HepG2 (cell line): ENCODE measurements at regions of chr12 and their contacts with region 1.

Region 1: DNA sequence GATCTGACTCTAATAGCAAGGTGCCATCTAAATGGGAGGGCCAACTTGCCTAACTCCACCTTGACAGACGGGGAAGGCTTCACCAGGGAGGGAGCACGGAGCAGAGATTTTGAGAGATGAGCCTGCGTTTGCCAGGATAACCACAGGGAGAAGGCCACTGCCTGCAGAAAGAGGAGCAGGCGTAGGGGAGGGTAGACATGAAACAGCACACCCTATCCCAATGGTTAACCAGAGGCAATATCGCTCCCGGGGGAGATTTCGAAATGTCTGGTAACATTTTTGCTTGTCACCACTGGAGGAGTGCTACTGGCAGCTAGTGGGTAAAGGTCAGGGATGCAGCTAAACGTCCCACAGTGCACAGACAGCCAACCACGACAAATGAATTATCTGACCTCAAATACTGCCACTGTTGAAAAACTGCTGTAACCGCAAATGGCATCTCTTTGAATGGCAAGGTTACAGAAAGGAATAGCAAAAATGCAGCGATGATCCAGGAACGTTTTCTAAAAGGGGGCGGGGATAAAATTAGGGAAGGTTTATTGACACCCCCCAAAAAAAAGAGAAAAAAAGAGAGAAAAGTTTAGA is 126.0 kb upstream of the ATF7IP start:
- DNase-seq: peak; percentile 85
- ATAC-seq: peak; percentile 99
- H3K4me3 ChIP-seq: peak overlapping the region in 1 of 3 experiments; percentile 24; a peak in 1 of 6 replicates
- H3K27ac ChIP-seq: no peak overlapping the region
- H3K4me1 ChIP-seq: peaks cover 18% of the 10 kb centered on the region
- H3K27me3 ChIP-seq: no peaks in the 10 kb centered on the region
- CTCF ChIP-seq: peak; percentile 48
- EP300 ChIP-seq: peak in 1 of 2 experiments; percentile 22; a peak in 1 of 4 replicates
- POLR2A ChIP-seq: no peak
- RAD21 ChIP-seq: 0 out of 2 replicates have a peak, but pooled peaks have one; percentile 27

Region 2: DNA sequence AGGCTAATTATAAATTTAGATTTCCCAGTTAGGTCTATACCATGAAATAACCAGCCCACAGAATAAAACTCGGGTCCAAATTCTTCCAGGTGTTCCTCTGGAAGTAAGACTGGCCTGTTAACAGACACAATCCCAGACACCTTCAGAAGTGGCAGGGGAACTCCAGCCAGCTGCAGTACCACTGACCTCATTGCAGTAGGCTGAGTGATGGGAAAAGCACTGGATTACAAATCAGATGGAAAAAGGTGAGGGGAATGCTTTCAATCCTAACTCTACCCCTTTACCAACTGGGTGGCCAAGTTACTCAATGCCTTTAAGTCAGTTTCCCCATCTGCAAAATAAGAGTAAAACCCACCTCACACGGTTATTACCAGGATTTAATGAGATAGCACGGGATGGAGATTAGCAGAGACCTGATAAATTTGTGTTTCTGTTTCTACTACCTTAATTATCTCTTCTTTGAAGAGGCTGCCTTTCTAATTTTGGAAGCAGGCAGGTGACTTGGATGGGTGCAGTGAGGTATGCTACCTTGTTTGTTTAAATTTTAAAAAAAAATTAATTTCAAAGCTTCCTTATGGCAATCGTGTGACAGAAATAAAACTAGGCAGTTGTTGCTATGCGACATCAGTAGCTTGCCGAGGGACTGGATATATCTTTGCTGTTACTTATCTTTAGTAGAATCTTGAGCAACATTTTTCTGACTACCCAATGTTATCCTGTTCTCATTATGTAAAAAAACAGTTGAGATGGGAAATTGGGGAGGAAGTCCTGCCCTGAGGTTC is 90.8 kb before region 1 on chr12:
- CTCF ChIA-PET with region 1: no interaction called
- POLR2A ChIA-PET with region 1: no interaction called
- in situ Hi-C with region 1: no loop called
- intact Hi-C with region 1: no loop called
- DNase-seq: no peak
- ATAC-seq: no peak
- H3K4me3 ChIP-seq: no peak overlapping the region
- H3K27ac ChIP-seq: no peak overlapping the region
- H3K4me1 ChIP-seq: no peaks in the 10 kb centered on the region
- H3K27me3 ChIP-seq: no peaks in the 10 kb centered on the region
- CTCF ChIP-seq: no peak
- EP300 ChIP-seq: no peak
- POLR2A ChIP-seq: no peak
- RAD21 ChIP-seq: no peak

Region 3: DNA sequence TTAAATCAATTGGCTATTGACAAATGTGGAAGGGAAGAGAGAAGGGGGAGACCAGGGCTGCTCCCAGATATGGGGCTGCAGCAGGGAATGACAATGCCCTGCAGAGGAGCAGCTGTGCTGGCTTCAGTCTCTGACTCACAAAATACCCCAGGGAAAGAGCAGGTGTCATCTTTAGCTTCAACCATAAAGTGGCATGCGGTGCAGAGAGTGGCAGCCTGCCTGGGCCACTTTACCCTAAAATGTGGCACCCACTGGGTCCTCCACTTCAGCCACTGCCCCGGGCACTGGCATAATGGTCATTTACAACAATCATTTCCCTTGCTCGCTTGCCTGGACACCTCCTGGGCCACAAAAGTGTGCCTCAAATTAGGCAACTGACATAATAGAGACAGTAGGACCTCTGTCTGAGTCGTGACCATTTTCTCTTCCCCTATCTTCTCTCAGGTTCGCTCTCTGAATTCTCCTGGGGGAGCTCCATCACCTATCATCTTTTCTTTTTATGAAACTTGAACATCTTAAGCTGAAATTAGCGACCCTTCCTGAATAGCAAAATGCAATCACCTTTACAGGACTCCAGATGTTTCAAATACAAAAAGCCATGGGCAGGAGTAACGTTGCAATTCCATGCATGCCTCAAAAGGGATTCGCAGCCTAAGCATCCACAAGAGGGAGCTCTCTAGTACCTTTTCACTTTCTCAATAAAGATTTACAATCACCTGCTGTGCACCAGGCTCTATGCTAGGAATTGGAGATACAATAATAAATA is 53.8 kb before region 1 on chr12:
- CTCF ChIA-PET with region 1: no interaction called
- POLR2A ChIA-PET with region 1: no interaction called
- in situ Hi-C with region 1: no loop called
- intact Hi-C with region 1: no loop called
- DNase-seq: peak; percentile 26
- ATAC-seq: peak; percentile 79
- H3K4me3 ChIP-seq: no peak overlapping the region
- H3K27ac ChIP-seq: no peak overlapping the region
- H3K4me1 ChIP-seq: no peaks in the 10 kb centered on the region
- H3K27me3 ChIP-seq: no peaks in the 10 kb centered on the region
- CTCF ChIP-seq: peak; percentile 65
- EP300 ChIP-seq: no peak
- POLR2A ChIP-seq: no peak
- RAD21 ChIP-seq: no peak

Region 4: DNA sequence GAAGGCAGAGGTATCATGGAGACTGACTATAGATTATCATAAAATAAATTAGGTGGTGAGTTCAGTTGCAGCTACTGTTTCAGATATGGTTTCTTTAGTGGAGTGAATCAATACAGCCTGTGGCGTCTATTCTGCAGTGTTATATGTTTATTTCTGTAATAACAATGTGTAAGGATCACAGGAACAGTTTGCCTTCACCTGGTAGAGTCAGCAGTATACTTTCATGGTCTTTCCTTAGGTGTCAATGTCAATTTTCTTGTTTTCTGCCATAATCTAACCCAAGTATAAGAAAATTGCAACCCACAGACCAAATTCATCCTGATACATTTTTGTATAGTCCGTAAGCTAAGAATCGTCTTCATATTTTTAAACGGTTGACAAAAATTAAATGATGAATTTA is 14.4 kb before region 1 on chr12:
- CTCF ChIA-PET with region 1: no interaction called
- POLR2A ChIA-PET with region 1: no interaction called
- in situ Hi-C with region 1: no loop called
- intact Hi-C with region 1: no loop called
- DNase-seq: no peak
- ATAC-seq: no peak
- H3K4me3 ChIP-seq: no peak overlapping the region
- H3K27ac ChIP-seq: no peak overlapping the region
- H3K4me1 ChIP-seq: no peaks in the 10 kb centered on the region
- H3K27me3 ChIP-seq: no peaks in the 10 kb centered on the region
- CTCF ChIP-seq: no peak
- EP300 ChIP-seq: no peak
- POLR2A ChIP-seq: no peak
- RAD21 ChIP-seq: no peak

Region 5: DNA sequence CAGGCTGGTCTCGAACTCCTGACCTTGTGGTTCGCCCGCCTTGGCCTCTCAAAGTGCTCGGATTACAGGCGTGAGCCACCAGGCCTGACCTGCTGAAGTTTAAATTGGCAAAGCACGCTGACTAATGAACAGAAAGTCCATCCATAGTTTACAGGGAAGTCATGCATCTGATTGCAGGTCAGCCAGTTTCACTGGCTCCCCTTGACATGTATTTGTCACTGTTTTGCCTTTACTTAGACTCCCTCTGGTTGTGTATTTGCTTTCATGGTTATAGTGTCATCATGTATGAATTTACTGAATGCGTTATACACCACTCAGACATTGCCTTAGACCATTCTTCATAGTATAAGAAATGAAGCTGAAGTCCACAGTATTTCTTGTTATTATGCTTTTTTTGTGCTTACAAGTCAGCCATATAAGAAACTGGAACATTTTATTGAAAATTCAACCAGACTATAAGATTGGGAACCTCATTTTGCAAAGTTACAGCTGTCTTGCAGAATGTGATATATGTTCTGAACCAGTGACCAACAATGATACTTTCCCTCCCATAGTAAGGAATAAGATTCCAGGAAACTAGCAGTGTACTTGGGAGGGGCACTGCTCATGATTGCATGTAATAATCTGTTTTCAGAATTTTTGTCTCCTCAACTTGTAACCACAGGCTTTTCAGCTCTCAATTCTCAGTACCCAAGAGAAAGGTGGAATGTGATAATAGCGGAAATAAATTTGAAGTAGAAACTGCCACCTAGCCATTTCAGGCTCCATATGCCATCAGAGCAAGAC is 74.1 kb after region 1 on chr12:
- CTCF ChIA-PET with region 1: no interaction called
- POLR2A ChIA-PET with region 1: no interaction called
- in situ Hi-C with region 1: no loop called
- intact Hi-C with region 1: no loop called
- DNase-seq: no peak
- ATAC-seq: no peak
- H3K4me3 ChIP-seq: no peak overlapping the region
- H3K27ac ChIP-seq: no peak overlapping the region
- H3K4me1 ChIP-seq: no peaks in the 10 kb centered on the region
- H3K27me3 ChIP-seq: no peaks in the 10 kb centered on the region
- CTCF ChIP-seq: no peak
- EP300 ChIP-seq: no peak
- POLR2A ChIP-seq: no peak
- RAD21 ChIP-seq: no peak

Region 6: GRCh38 chr12:14365294-14366208 is 126.1 kb after region 1 on chr12 and contains the start of gene ATF7IP:
- CTCF ChIA-PET with region 1: interaction called, 8 read pairs
- POLR2A ChIA-PET with region 1: interaction called, 3 read pairs
- in situ Hi-C with region 1: no loop called
- intact Hi-C with region 1: loop called (anchors 1 kb)
- DNase-seq: peak; percentile 29
- ATAC-seq: peak; percentile 75
- H3K4me3 ChIP-seq: peak within 1 kb of the TSS; percentile 41 to 55 (median 49)
- H3K27ac ChIP-seq: peak within 1 kb of the TSS; percentile 34
- H3K4me1 ChIP-seq: peaks cover 19% of the 10 kb centered on the region; the same call in 1 of the 2 replicates
- H3K27me3 ChIP-seq: no peaks in the 10 kb centered on the region
- CTCF ChIP-seq: peak; percentile 3; the same call in 1 of the 2 replicates
- EP300 ChIP-seq: peak in 1 of 2 experiments; percentile 88; a peak in 2 of 4 replicates
- POLR2A ChIP-seq: no peak
- RAD21 ChIP-seq: no peak
- total RNA-seq, gene ATF7IP: 11.8 and 15.2 TPM in 2 replicates

Region 7: GRCh38 chr12:14417715-14418114 is 178.3 kb after region 1 on chr12:
- CTCF ChIA-PET with region 1: no interaction called
- POLR2A ChIA-PET with region 1: no interaction called
- in situ Hi-C with region 1: no loop called
- intact Hi-C with region 1: loop called (anchors 1 kb)
- DNase-seq: peak; percentile 33
- ATAC-seq: peak; percentile 29; the same call in 1 of the 3 replicates
- H3K4me3 ChIP-seq: no peak overlapping the region
- H3K27ac ChIP-seq: no peak overlapping the region
- H3K4me1 ChIP-seq: no peaks in the 10 kb centered on the region
- H3K27me3 ChIP-seq: no peaks in the 10 kb centered on the region
- CTCF ChIP-seq: no peak
- EP300 ChIP-seq: no peak
- POLR2A ChIP-seq: no peak
- RAD21 ChIP-seq: no peak

Region 8: DNA sequence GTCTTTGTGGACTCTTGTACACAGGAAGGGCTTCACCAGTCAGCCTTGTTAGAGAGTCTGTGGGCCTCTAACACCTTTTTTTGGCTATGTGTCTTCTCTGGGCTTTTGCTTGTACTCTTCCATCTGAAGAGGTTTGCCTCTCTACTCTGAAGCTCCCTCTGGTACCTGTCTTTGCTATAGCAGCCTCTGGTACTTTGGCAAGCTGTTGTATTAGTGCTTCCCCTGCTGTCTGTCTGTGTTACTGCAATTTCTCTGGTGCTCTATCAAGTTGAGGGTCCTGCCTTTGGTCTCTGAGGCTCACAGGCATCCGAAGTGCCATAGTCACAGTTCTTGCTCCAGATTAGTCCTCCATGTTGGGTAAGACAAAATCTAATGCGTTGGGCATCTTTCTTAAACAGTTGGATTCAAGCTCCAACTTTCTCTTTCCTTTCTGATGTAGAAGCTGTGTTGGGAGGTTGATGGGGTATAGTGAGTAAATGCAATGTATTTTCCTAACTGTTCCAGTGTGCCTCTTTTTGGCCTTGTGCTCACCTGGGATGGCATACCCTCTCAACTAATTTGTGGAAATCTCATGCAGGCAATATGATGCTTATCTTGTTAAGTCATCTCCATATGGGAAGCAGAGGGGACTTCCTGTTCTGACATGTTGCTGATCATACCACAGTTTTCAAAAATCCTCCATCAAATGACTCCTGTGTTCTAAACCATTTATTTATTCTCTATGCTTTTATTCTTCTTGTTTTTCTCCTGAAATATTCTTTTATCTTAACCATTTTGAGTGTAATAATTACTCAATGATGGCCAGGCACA is 214.9 kb after region 1 on chr12:
- CTCF ChIA-PET with region 1: interaction called, 45 read pairs
- POLR2A ChIA-PET with region 1: no interaction called
- in situ Hi-C with region 1: no loop called
- intact Hi-C with region 1: loop called (anchors 1 kb)
- DNase-seq: peak; percentile 65
- ATAC-seq: peak; percentile 98
- H3K4me3 ChIP-seq: no peak overlapping the region
- H3K27ac ChIP-seq: no peak overlapping the region
- H3K4me1 ChIP-seq: no peaks in the 10 kb centered on the region
- H3K27me3 ChIP-seq: no peaks in the 10 kb centered on the region
- CTCF ChIP-seq: peak; percentile 70
- EP300 ChIP-seq: no peak
- POLR2A ChIP-seq: no peak
- RAD21 ChIP-seq: peak; percentile 78

Region 9: DNA sequence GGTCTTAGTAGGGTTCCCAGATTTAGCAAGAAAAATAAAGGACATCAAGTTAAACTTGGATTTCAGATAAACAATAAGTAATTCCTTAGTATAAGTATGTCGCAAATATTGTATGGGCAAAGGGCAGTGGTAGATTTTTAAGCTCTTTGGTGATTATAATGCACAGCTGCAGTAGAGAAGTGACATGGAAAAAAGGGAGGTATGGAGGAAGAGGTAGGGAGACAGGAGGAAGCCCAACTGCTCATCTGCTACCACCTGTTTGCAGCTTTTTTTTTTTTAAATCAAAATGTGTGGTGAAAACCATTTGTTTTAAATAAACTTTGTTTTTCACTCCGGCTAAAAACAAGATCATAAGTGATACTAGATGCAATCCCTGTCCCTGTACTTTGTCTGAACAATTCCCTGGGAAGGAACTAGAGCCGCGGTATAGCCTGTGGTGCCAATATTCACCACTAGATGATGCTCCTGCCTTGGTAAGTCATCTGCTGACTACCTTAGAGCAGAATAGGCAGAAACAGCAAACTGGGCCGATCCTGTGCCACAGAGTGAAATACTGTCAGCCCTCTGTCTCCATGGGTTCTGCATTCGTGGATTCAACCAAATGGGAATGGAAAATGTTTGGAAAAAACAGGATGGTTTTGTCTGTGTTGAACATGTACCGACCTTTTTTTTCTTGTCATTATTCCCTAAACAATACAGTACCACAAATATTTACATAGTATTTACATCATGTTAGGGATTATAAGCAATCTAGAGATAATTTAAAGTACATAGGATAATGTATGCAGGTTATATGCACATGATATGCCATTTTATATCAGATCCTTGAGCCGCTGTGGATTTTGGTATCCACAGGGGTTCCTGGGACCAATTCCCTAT is 390.6 kb after region 1 on chr12:
- CTCF ChIA-PET with region 1: no interaction called
- POLR2A ChIA-PET with region 1: no interaction called
- in situ Hi-C with region 1: no loop called
- intact Hi-C with region 1: loop called (anchors 10 kb)
- DNase-seq: peak; percentile 44
- ATAC-seq: peak; percentile 100
- H3K4me3 ChIP-seq: no peak overlapping the region
- H3K27ac ChIP-seq: no peak overlapping the region
- H3K4me1 ChIP-seq: no peaks in the 10 kb centered on the region
- H3K27me3 ChIP-seq: no peaks in the 10 kb centered on the region
- CTCF ChIP-seq: peak; percentile 91
- EP300 ChIP-seq: no peak
- POLR2A ChIP-seq: no peak
- RAD21 ChIP-seq: peak; percentile 72

Region 10: DNA sequence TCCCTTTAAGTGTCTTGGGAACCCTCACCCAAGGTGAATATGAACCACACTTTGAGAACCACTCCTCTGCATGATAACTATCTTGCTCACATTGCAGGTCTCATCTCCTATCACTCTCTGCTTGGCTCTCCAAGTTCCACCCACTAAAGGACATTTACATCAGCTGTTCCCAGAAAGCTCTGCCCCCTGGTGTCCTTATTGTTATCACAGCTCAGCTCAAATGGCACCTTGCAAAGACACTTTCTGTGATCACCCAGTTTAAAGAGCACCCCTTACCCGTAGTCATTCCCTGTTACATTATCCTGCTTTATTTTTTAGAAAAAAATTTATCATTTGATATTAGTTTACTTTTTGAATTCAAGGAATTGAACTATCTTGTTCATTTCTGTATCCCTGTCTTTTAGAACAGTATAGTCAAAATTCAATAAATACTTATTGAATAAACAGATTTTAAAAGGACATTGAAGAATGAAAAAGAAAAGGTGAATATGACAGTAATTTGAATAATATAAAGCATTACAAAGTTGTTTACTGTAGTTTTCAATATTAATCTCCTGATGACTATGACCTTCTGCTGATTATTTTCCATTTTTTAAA is 477.5 kb after region 1 on chr12:
- CTCF ChIA-PET with region 1: interaction called, 5 read pairs
- POLR2A ChIA-PET with region 1: no interaction called
- in situ Hi-C with region 1: loop called (anchors 25 kb)
- intact Hi-C with region 1: loop called (anchors 2 kb)
- DNase-seq: peak; percentile 52
- ATAC-seq: peak; percentile 88
- H3K4me3 ChIP-seq: no peak overlapping the region
- H3K27ac ChIP-seq: no peak overlapping the region
- H3K4me1 ChIP-seq: no peaks in the 10 kb centered on the region
- H3K27me3 ChIP-seq: no peaks in the 10 kb centered on the region
- CTCF ChIP-seq: peak; percentile 75
- EP300 ChIP-seq: no peak
- POLR2A ChIP-seq: no peak
- RAD21 ChIP-seq: no peak